ENCODE measurements at regions of chr1 and their contacts with region 1.

Region 1: DNA sequence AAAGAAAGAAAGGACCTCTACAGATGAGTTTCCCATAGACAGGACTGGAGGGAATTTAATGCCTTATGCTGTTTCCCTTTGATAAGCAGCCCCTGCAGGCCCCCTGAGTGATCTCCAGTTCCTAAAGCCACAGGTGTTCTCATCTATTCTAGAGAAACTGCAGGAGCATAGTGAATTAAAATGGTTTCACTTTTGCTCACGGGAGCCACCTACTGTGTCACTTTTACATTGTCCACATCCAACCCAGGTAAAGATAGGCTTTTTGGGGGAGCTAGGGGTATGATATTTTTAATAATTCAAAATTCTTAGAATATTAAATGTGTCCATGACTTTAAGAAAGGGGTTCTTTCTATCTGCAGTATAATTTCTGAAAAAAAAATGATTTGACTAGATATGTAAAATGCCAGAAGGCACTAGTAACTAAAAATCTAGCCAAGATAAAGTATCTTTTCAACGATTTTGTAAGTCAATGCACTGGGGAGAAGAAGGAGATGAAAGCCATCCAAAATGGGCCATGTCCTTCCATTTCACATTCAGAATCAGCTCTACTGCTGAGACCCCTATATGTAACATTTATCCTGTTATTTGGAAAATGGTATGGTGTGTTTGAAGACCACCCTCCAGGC is 267.3 kb upstream of the DUSP10 start:
- DNase-seq: peak in 2 of 7 donors; percentile 19 to 21
- H3K4me3 ChIP-seq: no peak overlapping the region
- H3K27ac ChIP-seq: no peak overlapping the region
- H3K4me1 ChIP-seq: no peaks in the 10 kb centered on the region
- H3K27me3 ChIP-seq: no peaks in the 10 kb centered on the region
- CTCF ChIP-seq: peak in 3 of 6 experiments; percentile 40 to 48 (median 45)
- POLR2A ChIP-seq: no peak

Region 2: GRCh38 chr1:221753828-221754188 is 255.4 kb before region 1 on chr1:
- intact Hi-C with region 1: loop called in 1 of 2 experiments (anchors 10 kb)
- DNase-seq: no peak
- H3K4me3 ChIP-seq: no peak overlapping the region
- H3K27ac ChIP-seq: no peak overlapping the region
- H3K4me1 ChIP-seq: no peaks in the 10 kb centered on the region
- H3K27me3 ChIP-seq: no peaks in the 10 kb centered on the region
- CTCF ChIP-seq: no peak
- POLR2A ChIP-seq: no peak

Region 3: DNA sequence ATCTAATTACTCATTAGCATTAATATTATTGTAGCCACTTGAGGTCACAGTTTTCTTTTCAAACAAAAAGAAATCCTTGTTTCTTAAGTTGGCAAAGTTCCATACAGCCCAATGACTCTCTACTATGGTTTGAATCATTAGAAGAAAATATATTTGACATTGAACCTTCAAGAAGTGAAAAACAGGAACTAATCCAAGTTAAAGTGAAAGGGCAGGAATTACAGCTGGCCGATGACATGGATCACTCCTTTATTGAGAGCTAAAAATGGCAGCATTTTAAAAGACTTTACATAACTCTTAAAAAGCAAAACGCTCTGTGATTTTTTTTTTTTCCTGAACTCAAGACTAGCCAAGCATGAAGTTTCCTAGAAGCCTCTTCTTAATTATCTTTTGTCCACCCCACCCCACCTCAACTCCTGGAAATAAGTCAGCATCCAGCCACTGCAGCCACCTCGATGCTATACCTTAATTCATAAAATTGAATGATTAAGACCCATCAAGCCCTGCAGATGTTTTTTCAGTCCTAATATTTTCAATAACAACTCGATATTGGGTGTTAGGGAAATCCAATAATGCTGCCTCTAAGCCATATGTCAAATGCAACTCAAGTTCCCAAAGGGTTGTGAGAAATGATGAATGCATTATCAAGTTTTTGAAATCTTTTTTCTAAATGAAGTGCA is 215.6 kb after region 1 on chr1:
- intact Hi-C with region 1: no loop called
- DNase-seq: peak in 1 of 7 donors; percentile 8
- H3K4me3 ChIP-seq: no peak overlapping the region
- H3K27ac ChIP-seq: no peak overlapping the region
- H3K4me1 ChIP-seq: peaks cover 5 to 7% of the 10 kb centered on the region in 2 donors
- H3K27me3 ChIP-seq: no peaks in the 10 kb centered on the region
- CTCF ChIP-seq: no peak
- POLR2A ChIP-seq: no peak

Measured in adrenal gland (tissue), 19 donors.